Caco-2 (cell line): ENCODE measurements at regions of chr3 and their contacts with region 1.

Region 1: DNA sequence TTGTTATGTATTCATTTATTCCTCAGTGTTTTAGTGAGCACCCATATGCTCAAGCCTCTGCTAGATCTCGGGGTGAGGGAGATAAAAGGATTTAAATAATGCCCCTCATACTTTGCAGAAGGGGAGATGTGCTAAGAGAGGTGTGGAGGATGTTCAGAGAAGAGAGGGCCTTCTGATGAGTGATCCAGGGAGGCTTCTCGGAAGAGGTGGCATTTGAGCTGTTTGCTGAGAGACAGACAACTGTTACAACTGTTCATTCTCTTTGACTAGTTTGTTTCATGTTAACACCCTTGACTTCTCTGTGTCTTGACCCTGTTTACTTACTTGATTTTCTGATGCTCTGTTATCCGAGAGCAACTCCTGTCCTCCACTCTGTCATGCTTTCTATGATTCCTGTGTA is 34.5 kb downstream of the MFSD1 start:
- DNase-seq: no peak
- H3K4me3 ChIP-seq: no peak overlapping the region
- H3K4me3 Mint-ChIP-seq: no peak overlapping the region
- H3K27ac Mint-ChIP-seq: no peak overlapping the region
- H3K4me1 ChIP-seq: no peaks in the 10 kb centered on the region
- H3K4me1 Mint-ChIP-seq: peaks cover 7% of the 10 kb centered on the region
- H3K27me3 ChIP-seq: no peaks in the 10 kb centered on the region
- H3K27me3 Mint-ChIP-seq: peaks cover 30% of the 10 kb centered on the region
- CTCF ChIP-seq: no peak

Region 2: DNA sequence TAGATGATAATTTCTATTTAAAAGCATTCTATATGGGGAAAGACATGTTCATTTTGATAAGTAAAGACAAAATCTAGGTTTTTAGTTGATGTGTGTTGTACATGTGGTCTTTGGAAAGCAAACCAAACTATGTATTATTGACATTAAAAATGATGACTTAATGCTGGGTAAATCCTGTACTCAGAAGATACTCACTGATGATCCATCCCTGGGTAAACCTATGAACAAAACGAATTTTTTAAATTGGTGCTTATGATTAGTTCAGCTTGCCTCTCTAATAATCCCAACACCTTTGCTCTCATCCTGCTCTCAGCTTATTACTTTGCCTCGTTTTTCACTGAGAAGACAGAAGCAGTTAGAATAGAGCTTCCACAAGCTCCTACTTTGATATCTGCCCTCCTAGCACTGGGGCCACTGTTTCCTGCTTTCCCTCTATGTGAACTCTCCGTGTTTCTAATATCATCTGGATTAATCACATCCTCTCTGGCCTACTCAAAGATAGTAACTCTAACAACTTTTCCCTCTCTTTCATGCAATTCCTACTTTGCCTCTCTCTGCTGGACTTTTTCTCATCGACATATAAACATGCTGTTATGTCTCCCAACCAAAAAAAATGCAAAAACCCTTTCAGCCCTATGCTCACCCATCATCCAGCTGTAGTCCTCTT is 133.4 kb before region 1 on chr3:
- CTCF ChIA-PET with region 1: no interaction called
- POLR2A ChIA-PET with region 1: interaction called, 18 read pairs
- intact Hi-C with region 1: no loop called
- DNase-seq: no peak
- H3K4me3 ChIP-seq: no peak overlapping the region
- H3K4me3 Mint-ChIP-seq: no peak overlapping the region
- H3K27ac Mint-ChIP-seq: no peak overlapping the region
- H3K4me1 ChIP-seq: no peaks in the 10 kb centered on the region
- H3K4me1 Mint-ChIP-seq: no peaks in the 10 kb centered on the region
- H3K27me3 ChIP-seq: no peaks in the 10 kb centered on the region
- H3K27me3 Mint-ChIP-seq: no peaks in the 10 kb centered on the region
- CTCF ChIP-seq: no peak

Region 3: GRCh38 chr3:158802409-158803268 is 33.7 kb before region 1 on chr3:
- CTCF ChIA-PET with region 1: no interaction called
- POLR2A ChIA-PET with region 1: no interaction called
- intact Hi-C with region 1: no loop called
- DNase-seq: no peak
- H3K4me3 ChIP-seq: peak overlapping the region; percentile 64
- H3K4me3 Mint-ChIP-seq: peak overlapping the region; percentile 85
- H3K27ac Mint-ChIP-seq: no peak overlapping the region
- H3K4me1 ChIP-seq: no peaks in the 10 kb centered on the region
- H3K4me1 Mint-ChIP-seq: peaks cover 7% of the 10 kb centered on the region
- H3K27me3 ChIP-seq: no peaks in the 10 kb centered on the region
- H3K27me3 Mint-ChIP-seq: no peaks in the 10 kb centered on the region
- CTCF ChIP-seq: no peak

Region 4: GRCh38 chr3:158819282-158819681 is 17.0 kb before region 1 on chr3:
- CTCF ChIA-PET with region 1: no interaction called
- POLR2A ChIA-PET with region 1: no interaction called
- intact Hi-C with region 1: no loop called
- DNase-seq: no peak
- H3K4me3 ChIP-seq: no peak overlapping the region
- H3K4me3 Mint-ChIP-seq: no peak overlapping the region
- H3K27ac Mint-ChIP-seq: no peak overlapping the region
- H3K4me1 ChIP-seq: no peaks in the 10 kb centered on the region
- H3K4me1 Mint-ChIP-seq: no peaks in the 10 kb centered on the region
- H3K27me3 ChIP-seq: no peaks in the 10 kb centered on the region
- H3K27me3 Mint-ChIP-seq: no peaks in the 10 kb centered on the region
- CTCF ChIP-seq: no peak

Region 5: DNA sequence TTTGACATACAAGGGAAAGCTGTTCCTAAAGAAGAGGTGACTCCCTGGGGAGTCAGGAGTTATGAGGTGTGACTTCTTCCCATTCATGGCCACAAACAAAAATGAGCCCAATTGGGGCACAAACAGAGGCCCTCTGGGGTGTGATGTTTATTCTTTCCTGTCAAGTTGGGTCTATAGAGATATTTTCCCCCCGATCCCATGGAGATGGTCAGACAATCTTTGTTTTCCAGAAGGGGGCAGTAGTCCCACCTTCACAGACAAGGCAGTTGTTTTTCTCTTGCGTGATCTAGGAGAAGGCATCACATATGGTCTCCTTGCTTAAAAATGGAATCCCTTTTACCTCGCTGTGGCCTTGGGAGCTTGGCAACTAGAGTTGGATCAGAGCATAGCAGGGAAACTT is 75.9 kb after region 1 on chr3:
- CTCF ChIA-PET with region 1: no interaction called
- POLR2A ChIA-PET with region 1: no interaction called
- intact Hi-C with region 1: no loop called
- DNase-seq: peak in 1 of 2 experiments; percentile 1
- H3K4me3 ChIP-seq: no peak overlapping the region
- H3K4me3 Mint-ChIP-seq: no peak overlapping the region
- H3K27ac Mint-ChIP-seq: no peak overlapping the region
- H3K4me1 ChIP-seq: no peaks in the 10 kb centered on the region
- H3K4me1 Mint-ChIP-seq: no peaks in the 10 kb centered on the region
- H3K27me3 ChIP-seq: no peaks in the 10 kb centered on the region; the same call in 1 of the 2 replicates
- H3K27me3 Mint-ChIP-seq: peaks cover 14% of the 10 kb centered on the region
- CTCF ChIP-seq: no peak

Region 6: DNA sequence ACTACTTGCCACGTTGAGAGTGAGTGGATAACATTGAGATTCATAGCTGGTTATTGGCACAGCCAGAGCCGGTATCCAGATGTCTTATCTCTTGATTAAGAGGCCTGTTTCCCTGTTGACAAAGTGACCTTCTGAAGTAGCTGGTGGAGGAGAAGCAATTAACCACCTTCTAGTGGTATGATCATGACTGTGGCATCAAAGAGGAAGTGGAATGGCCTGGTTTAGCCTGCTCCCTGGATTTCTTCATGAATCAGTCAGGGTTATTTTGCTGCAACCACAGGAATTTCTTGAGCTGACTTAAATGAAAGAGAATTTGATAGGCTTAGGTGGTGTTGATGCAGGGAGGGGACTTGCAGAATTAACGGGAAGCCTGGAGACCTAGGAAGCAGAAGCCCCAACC is 363.9 kb after region 1 on chr3:
- CTCF ChIA-PET with region 1: no interaction called
- POLR2A ChIA-PET with region 1: no interaction called
- intact Hi-C with region 1: no loop called
- DNase-seq: no peak
- H3K4me3 ChIP-seq: no peak overlapping the region
- H3K4me3 Mint-ChIP-seq: no peak overlapping the region
- H3K27ac Mint-ChIP-seq: no peak overlapping the region
- H3K4me1 ChIP-seq: no peaks in the 10 kb centered on the region
- H3K4me1 Mint-ChIP-seq: no peaks in the 10 kb centered on the region
- H3K27me3 ChIP-seq: no peaks in the 10 kb centered on the region
- H3K27me3 Mint-ChIP-seq: peaks cover 13% of the 10 kb centered on the region
- CTCF ChIP-seq: no peak